ENCODE measurements at regions of chrX and their contacts with region 1.

Region 1: DNA sequence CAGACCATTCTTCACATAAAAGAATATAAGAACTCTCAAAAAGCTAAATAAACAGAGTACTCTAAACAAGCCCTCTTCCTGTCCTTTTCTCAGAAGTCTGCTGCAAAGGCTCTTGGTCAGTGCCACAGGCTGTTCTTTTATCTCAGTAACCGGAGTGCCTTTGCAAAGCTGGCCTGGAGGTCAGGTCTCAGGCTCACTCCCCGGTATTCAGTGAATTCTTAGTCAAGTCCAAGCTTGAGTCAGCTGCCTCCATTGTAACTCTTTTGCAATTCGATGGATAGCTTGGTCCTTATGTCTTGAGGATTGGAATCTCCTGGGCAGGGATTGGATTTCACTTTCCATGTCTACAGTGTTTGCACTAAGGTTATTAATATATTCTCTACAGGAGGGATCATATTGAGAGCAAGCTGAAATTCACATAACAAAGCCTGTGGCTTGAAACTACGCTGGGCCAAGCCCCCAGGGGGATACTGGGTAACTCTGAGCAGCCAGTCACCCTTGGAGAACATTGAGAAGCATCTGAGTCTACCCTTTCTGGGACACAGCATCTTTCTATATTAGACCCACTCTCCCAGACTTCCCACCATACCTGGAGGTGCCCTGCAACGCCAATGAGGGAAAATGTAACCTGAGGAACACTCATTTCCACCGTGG is 10.0 kb upstream of the HS6ST2 start:
- DNase-seq: no peak

Region 2: GRCh38 chrX:132716006-132716405 is 252.4 kb before region 1 on chrX:
- intact Hi-C with region 1: no loop called
- DNase-seq: no peak

Region 3: DNA sequence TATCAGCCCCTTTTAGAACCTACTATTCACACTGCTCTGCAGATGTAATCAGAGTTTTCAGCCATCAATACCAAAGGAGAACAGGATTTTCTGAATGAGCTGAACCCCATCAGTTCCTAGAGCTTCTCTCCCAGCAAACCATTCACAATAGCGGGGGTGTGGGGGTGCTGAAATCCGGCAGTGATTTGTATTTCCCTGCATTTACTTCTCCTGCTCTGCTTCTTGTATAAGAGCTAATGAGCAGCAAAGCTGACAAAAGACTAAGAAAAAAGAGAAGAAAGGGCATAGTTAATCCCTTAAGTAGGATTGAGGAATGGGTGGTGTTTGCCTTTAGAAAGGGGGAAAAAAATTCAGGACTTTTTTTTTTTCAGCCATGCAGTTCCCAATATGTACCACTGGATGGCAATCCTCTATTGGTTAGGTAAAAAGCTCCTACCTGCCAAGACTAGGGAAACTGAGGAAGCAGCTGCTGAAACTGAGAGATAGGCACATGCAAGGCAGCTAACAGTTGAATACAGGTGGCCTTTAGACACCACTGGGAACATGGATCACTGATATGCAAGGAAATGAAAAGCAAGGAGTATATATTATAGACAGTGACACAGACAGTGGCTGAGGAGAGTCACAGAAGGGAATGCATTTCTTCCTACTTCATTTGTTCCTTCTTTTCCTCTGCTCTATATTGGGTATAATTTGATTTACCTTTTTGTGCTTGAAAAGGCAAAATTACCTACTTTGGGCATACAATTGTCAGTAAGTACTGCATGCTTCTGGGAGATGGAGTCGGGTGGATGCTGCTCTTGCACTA is 227.9 kb before region 1 on chrX:
- intact Hi-C with region 1: loop called (anchors 10 kb)
- DNase-seq: no peak

Region 4: DNA sequence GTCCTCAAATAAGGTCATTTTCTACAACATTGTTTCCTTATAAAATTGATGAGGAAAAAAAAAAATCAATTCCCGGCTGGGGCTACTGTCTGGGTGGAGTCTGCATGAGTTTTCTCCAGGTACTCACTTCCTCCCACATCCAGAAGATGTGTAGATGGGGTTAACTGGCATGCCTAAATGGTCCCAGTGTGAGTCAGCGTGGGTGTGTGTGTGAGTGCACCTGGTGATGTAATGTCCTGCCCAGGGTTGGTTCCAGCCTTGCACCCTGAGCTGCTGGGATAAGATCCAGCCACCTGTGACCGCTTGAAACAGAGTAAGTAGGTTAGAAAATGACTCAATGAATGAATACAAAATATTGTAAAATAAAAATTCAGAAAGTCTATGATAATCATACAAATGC is 117.4 kb after region 1 on chrX:
- intact Hi-C with region 1: no loop called
- DNase-seq: no peak